IMR-90 (cell line): ENCODE measurements at regions of chr4 and their contacts with region 1.

Region 1: DNA sequence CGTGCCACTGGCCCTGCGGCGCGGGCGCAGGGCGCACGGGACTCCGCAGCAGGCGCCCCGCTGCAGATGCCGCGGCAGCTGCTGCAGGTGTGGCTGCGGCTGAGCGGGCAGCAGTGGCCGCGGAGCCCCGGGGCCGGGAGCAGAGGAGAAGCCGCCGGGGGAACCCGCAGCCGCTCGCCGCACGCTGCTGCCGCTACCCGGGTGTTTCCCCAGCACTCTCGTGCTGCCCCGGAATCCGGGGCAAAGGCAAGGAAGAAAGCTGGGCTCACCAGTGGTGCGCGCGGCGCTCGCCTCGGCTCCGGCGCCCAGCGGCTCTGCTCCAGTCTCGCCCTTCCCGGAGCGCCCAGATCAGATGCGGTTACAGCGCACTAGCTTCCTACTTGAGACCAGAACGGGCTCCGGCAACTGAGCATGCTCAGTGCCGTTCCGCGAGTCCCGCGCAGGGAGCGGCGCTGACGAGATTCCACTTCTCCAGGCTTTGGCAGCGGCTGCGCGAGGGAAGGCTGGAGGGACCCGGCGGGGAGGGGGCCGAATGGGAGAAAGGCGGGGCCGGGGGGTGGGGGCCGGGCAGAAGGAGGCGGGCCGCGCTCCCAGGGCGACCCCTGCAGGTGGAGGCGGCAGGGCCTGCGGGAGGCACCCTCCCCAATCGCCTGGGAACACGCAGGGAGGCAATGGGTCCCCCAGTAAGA is at the start of gene APBB2:
- DNase-seq: peak; percentile 97
- ATAC-seq: peak; percentile 87
- H3K4me3 ChIP-seq: peak within 1 kb of the TSS; percentile 68
- H3K27ac ChIP-seq: peak within 1 kb of the TSS; percentile 55
- H3K4me1 ChIP-seq: peaks cover 2% of the 10 kb centered on the region; the same call in 1 of the 2 replicates
- H3K27me3 ChIP-seq: no peaks in the 10 kb centered on the region
- CTCF ChIP-seq: peak; percentile 67
- POLR2A ChIP-seq: peak; percentile 59; the same call in 1 of the 2 replicates
- RAD21 ChIP-seq: peak; percentile 69
- total RNA-seq, gene APBB2: 64.7 and 75.5 TPM in 2 replicates

Region 2: GRCh38 chr4:40924096-40924792 is 290.0 kb before region 1 on chr4:
- CTCF ChIA-PET with region 1: interaction called, 8 read pairs
- POLR2A ChIA-PET with region 1: no interaction called
- dilution Hi-C with region 1: no loop called
- in situ Hi-C with region 1: loop called (anchors 5 kb)
- intact Hi-C with region 1: loop called (anchors 1 kb)
- DNase-seq: peak; percentile 49
- ATAC-seq: peak; percentile 92
- H3K4me3 ChIP-seq: no peak overlapping the region
- H3K27ac ChIP-seq: no peak overlapping the region
- H3K4me1 ChIP-seq: no peaks in the 10 kb centered on the region
- H3K27me3 ChIP-seq: no peaks in the 10 kb centered on the region
- CTCF ChIP-seq: peak; percentile 88
- POLR2A ChIP-seq: no peak
- RAD21 ChIP-seq: peak; percentile 82

Region 3: DNA sequence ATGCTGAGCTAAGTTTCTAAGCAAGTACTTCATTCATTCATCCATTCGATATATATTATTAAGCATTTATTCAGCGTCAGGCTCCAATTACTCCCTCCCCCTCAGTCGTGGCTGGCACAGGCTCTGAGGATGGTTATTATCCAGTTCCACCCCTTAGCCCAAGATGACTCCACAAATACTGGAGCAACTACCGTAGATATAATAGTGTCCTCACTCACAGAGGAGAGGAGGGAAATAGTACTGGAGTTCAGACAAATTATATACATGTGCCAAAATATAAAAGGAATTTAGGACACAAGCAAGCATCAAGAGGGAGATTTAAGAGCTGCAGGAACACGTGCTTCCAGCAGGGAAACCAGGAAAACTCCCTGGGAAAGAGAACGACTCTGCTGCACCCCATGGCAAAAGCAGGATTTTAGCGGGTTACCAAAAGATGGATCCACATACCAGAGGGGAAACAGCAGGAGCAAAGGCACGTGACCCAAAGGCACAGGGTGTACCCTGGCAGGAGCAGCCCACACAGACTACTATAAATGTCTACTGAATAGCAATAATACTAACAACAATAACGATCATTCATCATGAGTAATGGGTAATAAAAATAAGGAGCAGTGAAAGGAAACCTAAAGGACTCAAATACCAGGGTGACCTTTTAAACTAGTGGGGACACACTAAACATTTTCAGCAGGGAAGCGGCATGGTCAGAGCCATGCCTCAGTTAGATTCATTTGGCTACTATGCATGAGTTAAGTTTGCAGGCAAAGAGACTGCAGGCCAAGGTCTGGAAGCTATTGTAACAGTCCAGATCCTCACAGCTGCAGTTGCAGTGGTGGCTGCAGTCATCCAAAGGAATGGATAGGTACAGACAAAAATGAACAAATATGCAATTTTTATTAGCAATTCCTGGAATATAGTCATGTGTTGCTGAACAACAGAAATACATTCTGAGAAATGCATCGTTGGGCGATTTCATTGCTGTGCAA is 153.6 kb before region 1 on chr4:
- CTCF ChIA-PET with region 1: no interaction called
- POLR2A ChIA-PET with region 1: interaction called, 4 read pairs
- dilution Hi-C with region 1: no loop called
- in situ Hi-C with region 1: no loop called
- intact Hi-C with region 1: loop called (anchors 2 kb)
- DNase-seq: no peak
- ATAC-seq: no peak
- H3K4me3 ChIP-seq: no peak overlapping the region
- H3K27ac ChIP-seq: no peak overlapping the region
- H3K4me1 ChIP-seq: peaks cover 15% of the 10 kb centered on the region
- H3K27me3 ChIP-seq: no peaks in the 10 kb centered on the region
- CTCF ChIP-seq: no peak
- POLR2A ChIP-seq: no peak
- RAD21 ChIP-seq: no peak

Region 4: GRCh38 chr4:41160012-41160789 is 54.1 kb before region 1 on chr4:
- CTCF ChIA-PET with region 1: no interaction called
- POLR2A ChIA-PET with region 1: no interaction called
- dilution Hi-C with region 1: no loop called
- in situ Hi-C with region 1: no loop called
- intact Hi-C with region 1: loop called (anchors 5 kb)
- DNase-seq: peak; percentile 96
- ATAC-seq: peak; percentile 77
- H3K4me3 ChIP-seq: no peak overlapping the region
- H3K27ac ChIP-seq: no peak overlapping the region
- H3K4me1 ChIP-seq: peaks cover 16% of the 10 kb centered on the region
- H3K27me3 ChIP-seq: no peaks in the 10 kb centered on the region
- CTCF ChIP-seq: no peak
- POLR2A ChIP-seq: no peak
- RAD21 ChIP-seq: no peak

Region 5: DNA sequence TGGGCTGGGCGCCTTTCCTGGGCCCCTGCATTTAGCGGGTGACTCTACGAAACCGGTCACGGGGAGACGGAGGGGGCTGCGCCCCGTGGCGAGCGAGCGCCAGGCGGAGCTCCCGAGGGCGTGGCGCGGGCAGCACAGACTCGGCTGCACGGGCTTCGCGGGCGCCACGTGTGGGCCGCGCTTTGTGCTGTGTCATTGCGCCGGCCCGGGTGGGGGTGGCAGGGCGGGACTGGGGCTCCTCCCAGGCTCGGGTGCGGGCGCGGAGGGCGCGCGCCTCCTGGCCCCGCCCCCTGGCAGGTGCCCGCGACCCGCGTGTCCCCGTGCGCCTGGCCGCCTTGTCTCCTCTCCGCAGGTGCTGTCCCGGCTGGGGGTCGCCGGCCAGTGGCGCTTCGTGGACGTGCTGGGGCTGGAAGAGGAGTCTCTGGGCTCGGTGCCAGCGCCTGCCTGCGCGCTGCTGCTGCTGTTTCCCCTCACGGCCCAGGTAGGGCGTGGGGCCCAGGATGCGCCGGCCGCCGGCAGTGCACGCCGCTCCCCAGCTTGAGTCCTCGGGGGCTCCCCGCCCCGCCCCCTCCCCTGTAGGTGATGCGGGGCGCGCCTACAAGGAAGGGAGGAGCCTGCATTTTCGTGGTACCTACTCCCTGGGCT is 43.1 kb after region 1 on chr4:
- CTCF ChIA-PET with region 1: interaction called, 3 read pairs
- POLR2A ChIA-PET with region 1: no interaction called
- dilution Hi-C with region 1: no loop called
- in situ Hi-C with region 1: no loop called
- intact Hi-C with region 1: loop called (anchors 1 kb)
- DNase-seq: peak; percentile 52
- ATAC-seq: peak; percentile 69
- H3K4me3 ChIP-seq: peak overlapping the region; percentile 94
- H3K27ac ChIP-seq: peak overlapping the region; percentile 84
- H3K4me1 ChIP-seq: peaks cover 4% of the 10 kb centered on the region
- H3K27me3 ChIP-seq: no peaks in the 10 kb centered on the region
- CTCF ChIP-seq: no peak
- POLR2A ChIP-seq: no peak
- RAD21 ChIP-seq: no peak